Common myeloid progenitor, CD34-positive (primary cell): ENCODE measurements at regions of chr16 and their contacts with region 1.

Region 1: DNA sequence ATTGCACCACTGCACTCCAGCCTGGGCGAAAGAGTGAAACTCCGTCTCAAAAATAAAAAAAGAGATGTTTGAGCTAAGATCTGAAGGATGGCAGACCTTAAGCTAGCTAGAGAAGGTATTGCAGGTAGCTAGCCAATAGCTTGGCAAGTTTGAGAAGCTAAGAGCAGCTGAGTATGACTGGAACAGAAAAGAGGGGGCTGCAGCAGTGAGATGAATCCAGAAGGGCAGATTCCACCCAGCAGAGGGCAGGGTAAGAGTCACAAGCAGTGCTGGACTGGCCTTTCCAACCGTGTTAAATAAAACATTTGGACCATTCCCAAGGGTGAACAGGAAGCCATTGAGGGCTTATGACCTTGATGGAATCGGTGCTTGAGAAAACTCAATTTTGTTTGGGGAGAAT is 5.7 kb upstream of the PHAF1 start:
- DNase-seq: peak; percentile 14 to 48 (median 45)
- H3K4me3 ChIP-seq: no peak overlapping the region
- H3K27ac ChIP-seq: no peak overlapping the region
- H3K4me1 ChIP-seq: peaks cover 2 to 8% (median 5%) of the 10 kb centered on the region in 4 experiments
- H3K27me3 ChIP-seq: no peaks in the 10 kb centered on the region

Region 2: GRCh38 chr16:67017810-67018488 is 86.1 kb before region 1 on chr16:
- CTCF ChIA-PET with region 1: interaction called, 206 read pairs
- POLR2A ChIA-PET with region 1: no interaction called
- DNase-seq: peak; percentile 94 to 96 (median 96)
- H3K4me3 ChIP-seq: no peak overlapping the region
- H3K27ac ChIP-seq: no peak overlapping the region
- H3K4me1 ChIP-seq: peaks cover 0 to 18% (median 15%) of the 10 kb centered on the region in 4 experiments
- H3K27me3 ChIP-seq: peaks cover 0 to 15% (median 12%) of the 10 kb centered on the region in 5 experiments

Region 3: DNA sequence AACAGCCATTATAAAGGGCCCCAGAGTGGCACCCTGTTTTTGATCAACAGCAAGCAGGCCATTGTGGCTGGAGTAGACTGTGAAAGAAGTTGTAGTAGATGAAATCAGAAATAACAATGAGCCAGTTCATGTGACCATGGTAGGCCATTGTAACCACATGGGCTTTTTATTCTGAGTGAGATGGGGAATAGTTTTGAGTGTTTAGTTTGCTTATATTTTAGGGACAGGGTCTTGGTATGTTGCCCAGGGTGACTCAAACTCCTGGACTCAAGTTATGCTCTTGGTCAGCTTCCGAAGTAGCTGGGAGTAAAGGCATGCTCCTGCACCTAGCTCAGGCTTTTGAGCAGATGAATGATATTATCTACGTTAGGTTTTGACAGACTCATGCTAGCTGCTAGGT is 63.2 kb before region 1 on chr16:
- CTCF ChIA-PET with region 1: interaction called, 20 read pairs
- POLR2A ChIA-PET with region 1: no interaction called
- DNase-seq: no peak
- H3K4me3 ChIP-seq: no peak overlapping the region
- H3K27ac ChIP-seq: no peak overlapping the region
- H3K4me1 ChIP-seq: peaks cover 0 to 1% (median 0%) of the 10 kb centered on the region in 4 experiments
- H3K27me3 ChIP-seq: no peaks in the 10 kb centered on the region

Region 4: GRCh38 chr16:67091906-67092566 is 12.0 kb before region 1 on chr16:
- CTCF ChIA-PET with region 1: interaction called, 12 read pairs
- POLR2A ChIA-PET with region 1: no interaction called
- DNase-seq: no peak
- H3K4me3 ChIP-seq: no peak overlapping the region
- H3K27ac ChIP-seq: no peak overlapping the region
- H3K4me1 ChIP-seq: peaks cover 0 to 9% (median 0%) of the 10 kb centered on the region in 4 experiments
- H3K27me3 ChIP-seq: no peaks in the 10 kb centered on the region

Region 5: DNA sequence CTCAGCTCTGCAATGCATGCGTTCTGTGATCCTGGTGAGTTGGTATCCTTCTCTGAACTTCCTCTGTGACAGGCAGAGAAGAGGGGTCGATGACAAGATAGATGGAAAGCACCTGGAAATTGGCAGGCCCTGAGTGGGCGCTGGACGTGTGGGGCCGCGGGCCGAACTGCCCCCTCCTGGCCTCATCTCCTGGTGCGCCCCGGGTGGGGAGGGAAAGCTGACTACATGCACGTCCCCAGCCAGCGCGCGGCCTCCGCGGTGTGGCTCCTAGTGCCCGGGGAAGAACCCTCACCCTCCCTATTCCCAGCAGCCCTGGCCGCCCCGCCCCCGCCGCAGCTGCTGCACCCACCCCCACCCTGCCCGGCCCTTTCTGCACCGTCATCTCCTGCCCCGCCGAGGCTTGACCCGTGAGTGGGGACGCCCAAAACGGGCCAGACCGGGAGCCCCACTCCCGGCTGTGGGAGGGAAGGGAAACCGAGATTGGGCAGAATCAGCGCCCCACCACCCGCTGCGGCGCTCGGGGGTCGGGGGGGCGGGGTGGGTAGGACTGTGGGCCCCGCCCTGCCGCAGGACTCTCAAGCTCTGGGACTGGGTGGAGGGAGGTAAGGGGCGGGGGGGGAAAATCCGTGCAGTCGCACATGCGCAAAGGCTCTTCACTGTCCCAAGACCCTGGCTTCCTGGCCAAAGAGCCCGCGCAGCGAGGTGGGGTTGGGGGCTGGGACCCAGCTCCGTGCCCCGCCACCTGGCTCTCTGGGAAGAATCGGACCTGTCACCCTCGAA is 66.3 kb after region 1 on chr16 and contains the start of gene NOL3:
- CTCF ChIA-PET with region 1: no interaction called
- POLR2A ChIA-PET with region 1: no interaction called
- DNase-seq: peak in 1 of 3 donors; percentile 54
- H3K4me3 ChIP-seq: peak within 1 kb of the TSS in 6 of 7 experiments; percentile 16 to 70 (median 44)
- H3K27ac ChIP-seq: peak within 1 kb of the TSS in 1 of 2 experiments; percentile 65
- H3K4me1 ChIP-seq: peaks cover 0 to 51% (median 38%) of the 10 kb centered on the region in 4 experiments
- H3K27me3 ChIP-seq: peaks cover 4 to 93% (median 46%) of the 10 kb centered on the region in 5 experiments

Region 6: DNA sequence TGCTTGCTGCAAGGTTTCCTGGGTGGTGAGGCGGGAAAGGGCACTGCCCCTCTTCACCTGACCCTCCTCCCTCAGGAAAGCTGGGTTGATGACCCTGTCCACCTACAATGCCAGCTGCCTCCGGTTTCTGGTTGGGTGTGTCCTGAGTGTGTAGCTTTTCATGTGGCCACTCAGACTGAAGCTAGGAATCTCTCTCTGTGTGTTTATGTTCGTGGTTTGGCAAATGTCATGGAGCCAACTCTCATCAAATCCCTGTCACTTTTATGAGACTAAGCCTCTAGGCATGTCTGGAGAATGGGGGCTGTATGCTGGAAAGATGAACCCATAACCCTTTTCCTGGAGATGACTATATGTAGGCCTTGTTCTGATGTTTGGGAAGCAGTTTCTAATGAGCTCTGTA is 192.4 kb after region 1 on chr16:
- CTCF ChIA-PET with region 1: no interaction called
- POLR2A ChIA-PET with region 1: no interaction called
- DNase-seq: no peak
- H3K4me3 ChIP-seq: no peak overlapping the region
- H3K27ac ChIP-seq: no peak overlapping the region
- H3K4me1 ChIP-seq: no peaks in the 10 kb centered on the region
- H3K27me3 ChIP-seq: no peaks in the 10 kb centered on the region

Region 7: GRCh38 chr16:67326472-67327309 is 222.6 kb after region 1 on chr16 and contains the starts of genes KCTD19 and LRRC36:
- CTCF ChIA-PET with region 1: no interaction called
- POLR2A ChIA-PET with region 1: no interaction called
- DNase-seq: peak; percentile 78 to 80 (median 78)
- H3K4me3 ChIP-seq: peak within 1 kb of the TSS; percentile 43 to 88 (median 68)
- H3K27ac ChIP-seq: peak within 1 kb of the TSS in 1 of 2 experiments; percentile 41
- H3K4me1 ChIP-seq: peaks cover 0 to 19% (median 11%) of the 10 kb centered on the region in 4 experiments
- H3K27me3 ChIP-seq: no peaks in the 10 kb centered on the region